Dorsolateral prefrontal cortex (tissue), 120 donors: ENCODE measurements at regions of chr19 and their contacts with region 1.

Region 1: GRCh38 chr19:38929929-38930775 is at the start of gene SARS2:
- DNase-seq: peak; percentile 83 to 94 (median 90)
- H3K4me3 ChIP-seq: peak within 1 kb of the TSS; percentile 60 to 99 (median 83)
- H3K27ac ChIP-seq: peak within 1 kb of the TSS; percentile 76 to 99 (median 96)
- H3K27me3 ChIP-seq: no peaks in the 10 kb centered on the region
- CTCF ChIP-seq: peak; percentile 98 to 100 (median 100)
- total RNA-seq, gene SARS2: 17.7 to 57.8 (median 28.6) TPM

Region 2: GRCh38 chr19:38402967-38403861 is 526.9 kb before region 1 on chr19 and contains the start of gene FAM98C:
- intact Hi-C with region 1: loop called (anchors 2 to 10 kb)
- DNase-seq: peak; percentile 89 to 97 (median 96)
- H3K4me3 ChIP-seq: peak within 1 kb of the TSS; percentile 57 to 99 (median 91)
- H3K27ac ChIP-seq: peak within 1 kb of the TSS; percentile 20 to 97 (median 89)
- H3K27me3 ChIP-seq: no peaks in the 10 kb centered on the region
- CTCF ChIP-seq: peak; percentile 95 to 100 (median 100)
- total RNA-seq, gene FAM98C: 31.5 to 65.9 (median 44.2) TPM

Region 3: GRCh38 chr19:38544034-38544958 is 385.9 kb before region 1 on chr19:
- intact Hi-C with region 1: loop called in 1 of 2 experiments (anchors 10 kb)
- DNase-seq: peak; percentile 30 to 94 (median 84)
- H3K4me3 ChIP-seq: peak overlapping the region in 56 of 59 donors; percentile 5 to 69 (median 45)
- H3K27ac ChIP-seq: peak overlapping the region in 58 of 59 donors; percentile 19 to 94 (median 82)
- H3K27me3 ChIP-seq: no peaks in the 10 kb centered on the region
- CTCF ChIP-seq: peak; percentile 45 to 80 (median 70)

Region 4: GRCh38 chr19:38718747-38719543 is 211.2 kb before region 1 on chr19:
- intact Hi-C with region 1: loop called (anchors 5 to 10 kb)
- DNase-seq: peak; percentile 46 to 85 (median 77)
- H3K4me3 ChIP-seq: peak overlapping the region in 1 of 59 donors; percentile 12
- H3K27ac ChIP-seq: peak overlapping the region; percentile 89 to 100 (median 97)
- H3K27me3 ChIP-seq: no peaks in the 10 kb centered on the region
- CTCF ChIP-seq: peak in 50 of 56 donors; percentile 8 to 59 (median 41)

Region 5: GRCh38 chr19:38729653-38730469 is 200.3 kb before region 1 on chr19:
- intact Hi-C with region 1: loop called in 1 of 2 experiments (anchors 10 kb)
- DNase-seq: peak in 4 of 10 donors; percentile 45 to 66 (median 56)
- H3K4me3 ChIP-seq: no peak overlapping the region
- H3K27ac ChIP-seq: peak overlapping the region in 48 of 59 donors; percentile 9 to 81 (median 59)
- H3K27me3 ChIP-seq: no peaks in the 10 kb centered on the region
- CTCF ChIP-seq: peak; percentile 20 to 80 (median 69)

Region 6: DNA sequence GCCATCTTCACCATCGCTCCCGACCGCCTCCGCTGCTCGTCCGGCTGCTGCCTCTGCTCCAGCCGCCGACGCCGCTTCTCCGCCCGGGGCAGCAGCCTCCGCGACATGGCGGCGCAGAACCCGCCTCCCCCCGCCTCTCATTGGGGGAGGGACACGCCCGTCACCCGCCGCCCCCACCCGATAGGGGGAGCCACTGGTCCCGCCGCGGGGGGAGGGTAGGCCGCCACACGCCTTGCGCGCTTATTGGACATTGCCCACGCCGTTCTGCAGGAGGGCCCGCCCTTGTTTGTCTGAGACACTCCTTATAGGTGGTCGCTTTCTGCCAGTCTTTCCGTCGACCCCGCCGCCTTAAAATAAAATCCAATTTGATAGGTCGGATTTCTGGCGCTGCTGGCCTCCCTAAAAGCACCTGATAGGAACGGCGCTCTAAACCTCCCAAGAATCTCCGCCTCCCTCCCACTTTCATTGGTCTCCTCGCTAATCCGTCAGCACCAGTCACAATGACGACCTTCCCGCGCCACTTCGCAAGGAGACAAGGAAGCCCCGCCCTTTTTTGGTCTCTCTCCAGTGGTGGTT is 80.2 kb before region 1 on chr19 and contains the start of gene HNRNPL:
- intact Hi-C with region 1: loop called in 1 of 2 experiments (anchors 1 kb)
- DNase-seq: peak in 8 of 10 donors; percentile 98 to 100 (median 100)
- H3K4me3 ChIP-seq: peak within 1 kb of the TSS; percentile 65 to 100 (median 92)
- H3K27ac ChIP-seq: peak within 1 kb of the TSS; percentile 97 to 100 (median 100)
- H3K27me3 ChIP-seq: no peaks in the 10 kb centered on the region
- CTCF ChIP-seq: peak in 54 of 56 donors; percentile 27 to 73 (median 50)
- total RNA-seq, gene HNRNPL: 179 to 311 (median 224) TPM

Region 7: DNA sequence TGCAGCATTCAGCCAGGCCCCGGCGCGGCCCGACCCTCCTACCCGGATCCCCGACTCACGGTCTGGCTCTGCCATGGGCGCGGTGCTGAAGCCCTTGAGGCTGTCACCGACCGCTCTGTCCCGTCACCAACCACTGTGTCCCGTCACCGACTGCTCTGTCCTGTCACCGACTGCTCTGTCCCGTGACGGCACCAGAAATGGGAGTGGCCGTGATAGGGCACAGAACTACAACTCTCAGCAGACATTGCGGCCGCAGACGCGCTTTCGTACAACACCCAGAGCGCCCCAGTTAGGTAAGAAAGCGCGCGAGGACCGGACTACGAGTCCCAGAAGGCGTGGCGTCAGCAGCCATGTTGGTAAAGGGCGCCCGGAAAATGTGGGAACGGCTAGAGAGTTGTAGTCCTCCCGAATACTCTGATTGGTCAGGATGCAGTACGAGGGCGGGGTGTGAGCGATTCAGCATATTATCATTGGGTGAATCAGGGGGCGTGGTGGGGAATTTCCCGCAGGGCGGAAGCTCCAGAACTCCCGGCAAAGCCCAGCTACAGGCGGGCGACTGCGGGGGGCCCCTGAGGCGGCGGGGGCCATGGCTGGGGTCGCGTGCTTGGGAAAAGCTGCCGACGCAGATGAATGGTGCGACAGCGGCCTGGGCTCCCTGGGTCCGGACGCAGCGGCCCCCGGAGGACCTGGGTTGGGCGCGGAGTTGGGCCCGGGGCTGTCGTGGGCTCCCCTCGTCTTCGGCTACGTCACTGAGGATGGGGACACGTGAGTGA is 30.5 kb before region 1 on chr19 and contains the starts of genes NFKBIB and SIRT2:
- intact Hi-C with region 1: loop called in 1 of 2 experiments (anchors 2 kb)
- DNase-seq: peak; percentile 99 to 100 (median 100)
- H3K4me3 ChIP-seq: peak within 1 kb of the TSS; percentile 77 to 100 (median 96)
- H3K27ac ChIP-seq: peak within 1 kb of the TSS; percentile 83 to 100 (median 97)
- H3K27me3 ChIP-seq: no peaks in the 10 kb centered on the region
- CTCF ChIP-seq: peak in 47 of 56 donors; percentile 9 to 65 (median 36)
- total RNA-seq, gene NFKBIB: 15.4 to 37.9 (median 22.5) TPM
- total RNA-seq, gene SIRT2: 113 to 397 (median 166) TPM